Calu3 (cell line): ENCODE measurements at regions of chr4 and their contacts with region 1.

Region 1: GRCh38 chr4:112765317-112765975 is 128.5 kb downstream of the LARP7 start:
- DNase-seq: no peak
- H3K4me3 Mint-ChIP-seq: no peak overlapping the region
- H3K27ac Mint-ChIP-seq: no peak overlapping the region
- H3K4me1 Mint-ChIP-seq: no peaks in the 10 kb centered on the region
- H3K27me3 Mint-ChIP-seq: no peaks in the 10 kb centered on the region
- CTCF ChIP-seq: peak; percentile 23

Region 2: DNA sequence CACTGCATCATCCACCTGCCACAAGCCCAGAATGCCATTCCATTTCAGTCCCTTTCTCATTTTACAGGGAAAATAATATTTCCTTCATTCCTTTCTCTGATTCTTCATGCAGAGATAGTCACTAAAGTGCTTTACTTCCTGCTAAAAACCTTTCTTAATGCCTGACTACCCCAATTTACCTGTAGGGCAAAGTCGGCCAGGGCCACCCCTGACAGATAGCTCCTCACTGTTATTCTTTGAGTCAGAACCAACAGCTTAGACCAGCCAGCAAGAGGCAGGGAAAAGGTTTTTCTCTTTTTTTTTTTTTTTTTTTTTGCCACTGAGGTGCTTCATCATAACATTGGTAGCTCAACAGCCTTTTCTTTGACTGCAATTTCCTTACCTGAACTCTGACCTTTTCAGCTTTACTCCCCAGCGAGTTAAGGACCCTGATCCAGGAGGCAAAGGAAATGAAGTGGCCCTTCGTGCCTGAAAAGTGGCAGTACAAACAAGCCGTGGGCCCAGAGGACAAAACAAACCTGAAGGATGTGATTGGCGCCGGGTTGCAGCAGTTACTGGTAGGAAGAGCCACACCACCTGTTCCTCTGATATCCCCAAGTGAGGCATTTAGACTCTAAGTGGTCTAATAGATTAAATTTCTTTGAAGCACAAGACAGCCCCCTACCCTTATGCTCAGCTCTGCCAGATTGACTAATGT is 383.3 kb before region 1 on chr4:
- CTCF ChIA-PET with region 1: no interaction called
- intact Hi-C with region 1: no loop called
- DNase-seq: no peak
- H3K4me3 Mint-ChIP-seq: no peak overlapping the region
- H3K27ac Mint-ChIP-seq: no peak overlapping the region
- H3K4me1 Mint-ChIP-seq: no peaks in the 10 kb centered on the region
- H3K27me3 Mint-ChIP-seq: no peaks in the 10 kb centered on the region
- CTCF ChIP-seq: no peak

Region 3: GRCh38 chr4:112532267-112532666 is 233.2 kb before region 1 on chr4:
- CTCF ChIA-PET with region 1: no interaction called
- intact Hi-C with region 1: no loop called
- DNase-seq: no peak
- H3K4me3 Mint-ChIP-seq: no peak overlapping the region
- H3K27ac Mint-ChIP-seq: no peak overlapping the region
- H3K4me1 Mint-ChIP-seq: no peaks in the 10 kb centered on the region
- H3K27me3 Mint-ChIP-seq: no peaks in the 10 kb centered on the region
- CTCF ChIP-seq: no peak

Region 4: DNA sequence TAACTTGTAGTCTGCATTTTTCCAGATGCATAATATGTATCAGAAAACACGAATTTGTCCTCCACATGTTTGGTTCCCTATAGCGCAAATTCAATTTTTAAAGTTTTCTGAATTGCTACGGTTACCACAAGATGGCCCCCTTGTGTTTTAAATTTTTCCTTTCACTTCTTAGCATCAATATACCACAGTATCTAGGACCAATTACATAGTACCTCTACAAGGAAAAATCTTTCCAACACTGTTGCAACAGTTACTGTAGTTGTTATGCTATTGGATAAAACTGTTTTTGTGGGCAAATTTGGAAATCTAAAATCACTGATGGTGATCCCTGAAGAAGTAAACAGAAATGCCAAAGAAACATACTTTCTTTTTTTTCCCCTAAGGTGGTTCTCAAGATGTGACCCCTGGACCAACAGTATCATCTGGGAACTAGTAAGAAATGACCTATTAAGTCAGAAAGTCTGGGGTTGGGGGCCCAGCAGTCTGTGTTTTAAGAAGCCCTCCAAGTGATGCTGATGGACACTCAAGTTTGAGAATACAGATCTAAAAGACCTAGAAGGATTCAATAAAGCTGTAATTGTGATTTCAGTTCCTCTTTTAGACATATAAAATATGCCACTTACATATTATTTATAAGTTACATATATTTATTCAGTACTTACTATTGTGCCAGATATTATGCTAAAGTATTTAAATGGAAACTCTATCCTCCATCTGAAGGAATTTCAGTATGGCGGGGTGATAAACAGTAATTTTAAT is 131.8 kb before region 1 on chr4:
- CTCF ChIA-PET with region 1: interaction called, 8 read pairs
- intact Hi-C with region 1: loop called (anchors 1 kb)
- DNase-seq: no peak
- H3K4me3 Mint-ChIP-seq: no peak overlapping the region
- H3K27ac Mint-ChIP-seq: no peak overlapping the region
- H3K4me1 Mint-ChIP-seq: no peaks in the 10 kb centered on the region
- H3K27me3 Mint-ChIP-seq: no peaks in the 10 kb centered on the region
- CTCF ChIP-seq: no peak

Region 5: DNA sequence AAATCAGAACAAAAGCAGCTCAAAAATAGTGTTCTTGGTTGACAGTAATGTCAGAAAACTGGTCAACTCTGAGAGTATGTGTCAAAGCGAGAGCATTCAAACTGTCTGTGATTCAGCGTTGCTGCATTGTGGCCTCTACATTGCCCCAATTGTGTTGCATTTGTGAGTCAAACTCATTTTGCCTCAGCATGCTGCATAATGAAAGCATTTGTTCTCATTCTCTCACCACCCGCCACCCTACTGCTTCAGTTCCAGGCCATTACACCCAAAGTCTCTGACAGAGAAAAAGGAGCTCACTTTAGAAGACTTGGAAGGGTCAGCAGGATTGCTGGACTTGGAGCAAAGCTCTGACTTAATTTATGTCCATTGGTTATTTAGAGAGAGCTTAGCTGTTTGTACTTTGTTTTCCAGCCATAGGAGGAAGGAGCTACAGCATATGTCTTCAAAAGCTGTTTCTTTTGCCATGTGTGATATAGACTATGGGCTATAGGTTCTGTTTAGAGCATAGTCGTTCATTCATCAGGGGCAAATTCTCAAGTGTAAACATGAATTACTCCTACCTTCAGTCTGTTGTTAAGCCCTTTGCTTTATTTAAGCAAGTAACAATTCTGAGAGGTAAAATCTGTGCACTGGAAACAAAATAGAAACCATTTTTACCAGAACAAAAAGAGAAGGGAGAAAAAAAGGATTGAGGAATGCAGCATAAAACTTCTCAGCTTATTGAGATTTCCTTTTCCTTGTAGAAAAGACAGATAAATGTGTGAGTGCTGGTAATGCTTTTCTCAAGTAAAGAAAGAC is 130.6 kb after region 1 on chr4:
- CTCF ChIA-PET with region 1: no interaction called
- intact Hi-C with region 1: no loop called
- DNase-seq: no peak
- H3K4me3 Mint-ChIP-seq: no peak overlapping the region
- H3K27ac Mint-ChIP-seq: no peak overlapping the region
- H3K4me1 Mint-ChIP-seq: no peaks in the 10 kb centered on the region
- H3K27me3 Mint-ChIP-seq: no peaks in the 10 kb centered on the region
- CTCF ChIP-seq: no peak

Region 6: GRCh38 chr4:112938461-112939058 is 173.1 kb after region 1 on chr4:
- CTCF ChIA-PET with region 1: interaction called, 3 read pairs
- intact Hi-C with region 1: loop called (anchors 1 kb)
- DNase-seq: no peak
- H3K4me3 Mint-ChIP-seq: no peak overlapping the region
- H3K27ac Mint-ChIP-seq: no peak overlapping the region
- H3K4me1 Mint-ChIP-seq: no peaks in the 10 kb centered on the region
- H3K27me3 Mint-ChIP-seq: no peaks in the 10 kb centered on the region
- CTCF ChIP-seq: peak; percentile 21

Region 7: DNA sequence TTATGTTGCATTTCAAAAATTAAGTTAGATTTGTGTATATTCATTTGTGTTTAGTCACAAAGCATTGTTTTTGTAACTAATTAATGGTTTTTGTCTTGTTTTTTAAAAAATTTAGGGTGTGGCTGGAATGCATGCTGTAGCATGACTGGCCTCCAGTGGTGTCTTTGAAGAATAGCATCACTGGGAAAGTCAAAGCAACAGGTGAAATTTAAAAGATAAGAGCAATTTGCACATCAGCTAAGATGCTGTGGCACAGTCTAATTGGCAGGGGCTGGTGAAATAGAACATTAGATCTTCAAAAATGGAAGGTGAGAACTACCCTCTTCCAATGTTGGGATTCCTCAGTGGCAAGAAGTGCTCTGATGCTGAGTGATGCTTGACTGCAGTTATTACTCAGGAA is 329.4 kb after region 1 on chr4:
- CTCF ChIA-PET with region 1: interaction called, 4 read pairs
- intact Hi-C with region 1: loop called (anchors 10 kb)
- DNase-seq: no peak
- H3K4me3 Mint-ChIP-seq: no peak overlapping the region
- H3K27ac Mint-ChIP-seq: no peak overlapping the region
- H3K4me1 Mint-ChIP-seq: no peaks in the 10 kb centered on the region
- H3K27me3 Mint-ChIP-seq: no peaks in the 10 kb centered on the region
- CTCF ChIP-seq: peak; percentile 56